CD4-positive, alpha-beta T cell (primary cell): ENCODE measurements at regions of chr15 and their contacts with region 1.

Region 1: GRCh38 chr15:68319997-68320396 is 42.5 kb downstream of the FEM1B start:
- DNase-seq: no peak
- ATAC-seq: no peak
- H3K4me3 ChIP-seq: no peak overlapping the region
- H3K4me3 Mint-ChIP-seq: no peak overlapping the region
- H3K27ac ChIP-seq: no peak overlapping the region
- H3K27ac Mint-ChIP-seq: no peak overlapping the region
- H3K4me1 ChIP-seq: no peaks in the 10 kb centered on the region
- H3K4me1 Mint-ChIP-seq: peaks cover 19% of the 10 kb centered on the region
- H3K27me3 ChIP-seq: no peaks in the 10 kb centered on the region
- H3K27me3 Mint-ChIP-seq: no peaks in the 10 kb centered on the region
- CTCF ChIP-seq: no peak

Region 2: DNA sequence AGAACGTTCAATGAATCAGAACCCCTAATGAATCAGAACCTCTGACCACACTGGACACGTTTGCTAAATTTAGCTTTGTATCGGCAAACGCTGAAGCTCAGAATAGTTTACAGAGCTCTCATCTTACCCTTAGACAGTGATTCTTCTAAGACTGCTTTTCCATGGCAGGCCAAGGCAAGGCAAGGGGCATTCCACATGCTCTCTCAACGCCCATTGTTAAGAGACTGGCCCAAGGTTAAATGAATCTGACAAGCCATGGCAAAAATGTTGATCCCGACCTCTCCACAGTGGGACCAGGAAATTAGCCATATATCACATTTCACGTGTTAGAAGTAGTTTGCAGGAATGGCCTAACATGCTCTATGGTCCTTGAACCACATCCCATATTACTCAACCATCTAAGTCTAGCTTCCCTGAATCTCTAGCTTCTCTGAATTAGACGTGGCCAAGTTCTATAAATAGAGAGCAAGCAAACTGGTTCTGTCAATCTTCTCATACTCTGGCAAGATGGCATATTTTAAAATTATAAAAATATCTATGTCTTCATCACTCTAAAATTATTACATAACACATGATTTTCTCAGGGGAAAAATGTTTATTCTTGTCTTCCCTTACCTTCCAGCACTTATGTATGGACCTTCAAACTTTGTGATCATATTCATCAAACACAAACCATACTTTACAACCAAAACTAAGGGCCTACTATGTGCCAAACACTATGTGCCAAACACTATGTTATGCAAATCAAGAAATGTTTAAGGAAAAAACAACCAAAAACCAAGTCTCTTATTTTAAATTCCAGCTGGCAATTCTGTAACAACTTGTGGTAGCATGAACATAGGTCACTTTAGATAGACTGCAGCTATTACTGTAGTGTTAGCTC is 1119.9 kb before region 1 on chr15:
- CTCF ChIA-PET with region 1: no interaction called
- POLR2A ChIA-PET with region 1: no interaction called
- intact Hi-C with region 1: loop called in 1 of 2 experiments (anchors 5 kb)
- DNase-seq: no peak
- ATAC-seq: no peak
- H3K4me3 ChIP-seq: no peak overlapping the region
- H3K4me3 Mint-ChIP-seq: no peak overlapping the region
- H3K27ac ChIP-seq: no peak overlapping the region
- H3K27ac Mint-ChIP-seq: no peak overlapping the region
- H3K4me1 ChIP-seq: peaks cover 7% of the 10 kb centered on the region
- H3K4me1 Mint-ChIP-seq: peaks cover 9% of the 10 kb centered on the region
- H3K27me3 ChIP-seq: no peaks in the 10 kb centered on the region
- H3K27me3 Mint-ChIP-seq: no peaks in the 10 kb centered on the region
- CTCF ChIP-seq: no peak

Region 3: GRCh38 chr15:68210821-68211655 is 109.0 kb before region 1 on chr15:
- CTCF ChIA-PET with region 1: no interaction called
- POLR2A ChIA-PET with region 1: no interaction called
- intact Hi-C with region 1: no loop called
- DNase-seq: peak; percentile 19 to 67 (median 42)
- ATAC-seq: peak; percentile 58
- H3K4me3 ChIP-seq: no peak overlapping the region
- H3K4me3 Mint-ChIP-seq: no peak overlapping the region
- H3K27ac ChIP-seq: no peak overlapping the region
- H3K27ac Mint-ChIP-seq: no peak overlapping the region
- H3K4me1 ChIP-seq: peaks cover 43% of the 10 kb centered on the region
- H3K4me1 Mint-ChIP-seq: peaks cover 22% of the 10 kb centered on the region
- H3K27me3 ChIP-seq: no peaks in the 10 kb centered on the region
- H3K27me3 Mint-ChIP-seq: no peaks in the 10 kb centered on the region
- CTCF ChIP-seq: peak; percentile 63

Region 4: DNA sequence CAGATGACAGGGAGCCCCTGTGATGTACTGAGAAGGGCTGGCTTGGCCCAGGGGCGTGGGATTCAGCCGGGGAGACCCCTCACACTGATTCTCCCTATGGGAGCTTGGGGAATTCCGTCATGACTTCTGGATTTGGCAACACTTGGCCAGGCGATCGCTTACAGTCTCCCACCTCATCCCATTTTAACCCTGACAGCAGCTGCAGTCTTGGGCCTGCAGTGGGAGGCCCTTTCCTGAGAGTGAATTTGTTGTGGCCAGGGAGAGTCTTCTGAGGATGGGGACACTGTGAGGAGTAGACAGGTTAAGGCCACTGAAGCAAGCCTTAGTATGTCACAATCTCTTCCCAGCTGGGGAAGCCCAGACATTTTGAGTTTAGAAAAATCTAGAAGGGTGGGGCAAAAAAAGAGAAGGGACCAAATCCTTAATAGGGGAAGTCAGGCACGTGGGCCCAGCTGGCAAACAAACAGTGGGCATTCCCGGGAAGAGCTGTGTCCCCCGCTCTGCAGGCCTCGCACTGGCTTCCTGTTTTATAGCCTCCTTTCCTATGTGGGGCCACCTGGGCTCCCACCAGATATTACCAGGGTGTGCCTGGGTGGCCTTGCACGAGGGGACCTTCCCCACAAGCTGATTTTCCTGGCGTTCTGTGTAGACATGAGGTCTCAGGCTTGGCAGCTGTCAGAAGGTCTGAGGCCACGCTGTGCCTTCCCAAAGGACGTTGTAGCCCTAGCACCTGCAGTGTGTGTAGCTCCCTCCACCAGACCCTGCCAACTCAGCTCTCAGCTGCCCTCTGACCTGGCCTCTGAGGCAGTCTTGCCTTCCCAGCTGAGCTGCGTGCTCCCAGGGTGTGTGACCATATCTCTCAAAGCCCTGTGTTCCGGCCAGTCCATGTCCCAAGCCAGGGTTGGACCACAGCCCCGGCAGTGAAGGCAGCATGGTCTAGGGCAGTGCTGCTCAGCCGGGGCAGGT is 22.0 kb after region 1 on chr15:
- CTCF ChIA-PET with region 1: no interaction called
- POLR2A ChIA-PET with region 1: no interaction called
- intact Hi-C with region 1: no loop called
- DNase-seq: peak in 2 of 14 experiments; percentile 28 to 43
- ATAC-seq: no peak
- H3K4me3 ChIP-seq: no peak overlapping the region
- H3K4me3 Mint-ChIP-seq: no peak overlapping the region
- H3K27ac ChIP-seq: no peak overlapping the region
- H3K27ac Mint-ChIP-seq: no peak overlapping the region
- H3K4me1 ChIP-seq: no peaks in the 10 kb centered on the region
- H3K4me1 Mint-ChIP-seq: no peaks in the 10 kb centered on the region
- H3K27me3 ChIP-seq: peaks cover 0 to 2% of the 10 kb centered on the region in 2 experiments
- H3K27me3 Mint-ChIP-seq: no peaks in the 10 kb centered on the region
- CTCF ChIP-seq: no peak

Region 5: GRCh38 chr15:68566377-68566954 is 246.5 kb after region 1 on chr15:
- CTCF ChIA-PET with region 1: no interaction called
- POLR2A ChIA-PET with region 1: no interaction called
- intact Hi-C with region 1: no loop called
- DNase-seq: no peak
- ATAC-seq: no peak
- H3K4me3 ChIP-seq: no peak overlapping the region
- H3K4me3 Mint-ChIP-seq: no peak overlapping the region
- H3K27ac ChIP-seq: no peak overlapping the region
- H3K27ac Mint-ChIP-seq: no peak overlapping the region
- H3K4me1 ChIP-seq: no peaks in the 10 kb centered on the region
- H3K4me1 Mint-ChIP-seq: no peaks in the 10 kb centered on the region
- H3K27me3 ChIP-seq: peaks cover 2 to 6% of the 10 kb centered on the region in 2 experiments
- H3K27me3 Mint-ChIP-seq: peaks cover 43% of the 10 kb centered on the region
- CTCF ChIP-seq: no peak

Region 6: GRCh38 chr15:68862415-68862814 is 542.4 kb after region 1 on chr15:
- CTCF ChIA-PET with region 1: no interaction called
- POLR2A ChIA-PET with region 1: no interaction called
- intact Hi-C with region 1: no loop called
- DNase-seq: no peak
- ATAC-seq: no peak
- H3K4me3 ChIP-seq: no peak overlapping the region
- H3K4me3 Mint-ChIP-seq: no peak overlapping the region
- H3K27ac ChIP-seq: no peak overlapping the region
- H3K27ac Mint-ChIP-seq: no peak overlapping the region
- H3K4me1 ChIP-seq: no peaks in the 10 kb centered on the region
- H3K4me1 Mint-ChIP-seq: no peaks in the 10 kb centered on the region
- H3K27me3 ChIP-seq: no peaks in the 10 kb centered on the region
- H3K27me3 Mint-ChIP-seq: peaks cover 8% of the 10 kb centered on the region
- CTCF ChIP-seq: no peak